PC-9 (cell line): ENCODE measurements at regions of chr2 and their contacts with region 1.

Region 1: GRCh38 chr2:203014456-203015199 is at the start of gene NBEAL1:
- DNase-seq: peak; percentile 84 to 96
- H3K4me3 ChIP-seq: peak within 1 kb of the TSS; percentile 83
- H3K27ac ChIP-seq: peak within 1 kb of the TSS; percentile 86
- H3K4me1 ChIP-seq: peaks cover 24% of the 10 kb centered on the region
- H3K27me3 ChIP-seq: no peaks in the 10 kb centered on the region
- CTCF ChIP-seq: no peak
- total RNA-seq, gene NBEAL1: 19.5 and 20.7 TPM in 2 replicates

Region 2: GRCh38 chr2:201929281-201930026 is 1085.2 kb before region 1 on chr2:
- CTCF ChIA-PET with region 1: no interaction called
- POLR2A ChIA-PET with region 1: no interaction called
- intact Hi-C with region 1: no loop called
- DNase-seq: no peak
- H3K4me3 ChIP-seq: no peak overlapping the region
- H3K27ac ChIP-seq: no peak overlapping the region
- H3K4me1 ChIP-seq: no peaks in the 10 kb centered on the region
- H3K27me3 ChIP-seq: no peaks in the 10 kb centered on the region
- CTCF ChIP-seq: no peak

Region 3: DNA sequence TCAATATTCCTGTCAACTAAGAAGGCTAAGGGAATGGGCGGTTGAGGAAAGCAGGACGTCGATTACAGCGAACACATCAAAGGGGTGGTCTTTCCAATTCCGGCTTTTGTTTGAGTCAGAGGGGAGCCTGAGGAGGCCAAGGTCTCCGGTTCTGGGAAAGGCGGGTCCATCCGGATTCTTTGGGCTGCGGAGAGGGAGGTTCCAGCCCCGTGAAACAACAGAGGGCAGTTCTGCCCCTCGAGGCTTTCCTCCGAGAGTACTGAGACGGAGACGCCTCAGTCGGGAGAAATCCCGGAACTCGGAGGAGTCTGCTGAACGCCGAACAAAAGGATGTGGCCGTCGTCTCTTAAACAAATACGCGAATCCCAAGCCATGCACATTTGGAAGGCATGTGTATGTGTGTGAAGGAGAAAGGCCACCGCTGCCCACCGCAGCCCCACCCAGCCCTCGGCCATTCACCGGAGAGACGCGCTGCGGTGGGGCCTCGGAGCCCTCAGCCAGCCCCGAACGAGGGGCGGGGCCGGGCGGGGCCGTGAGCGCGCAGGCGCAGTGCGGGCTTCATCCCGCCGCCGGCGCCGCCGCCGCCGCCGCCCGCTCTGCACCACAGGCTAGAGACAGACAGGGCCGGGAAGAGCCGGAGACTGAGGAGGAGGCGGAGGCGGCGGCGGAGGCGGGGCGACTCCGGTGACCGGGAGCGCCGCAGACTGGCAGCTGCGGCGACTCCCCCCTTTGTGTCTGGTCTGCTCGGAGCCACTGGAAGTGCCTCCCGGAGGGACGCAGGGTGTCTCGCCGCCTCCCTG is 638.8 kb before region 1 on chr2 and contains the start of gene BMPR2:
- CTCF ChIA-PET with region 1: interaction called, 12 read pairs
- POLR2A ChIA-PET with region 1: no interaction called
- intact Hi-C with region 1: no loop called
- DNase-seq: peak; percentile 64 to 90
- H3K4me3 ChIP-seq: peak within 1 kb of the TSS; percentile 85
- H3K27ac ChIP-seq: peak within 1 kb of the TSS; percentile 77
- H3K4me1 ChIP-seq: peaks cover 22% of the 10 kb centered on the region; the same call in 1 of the 2 replicates
- H3K27me3 ChIP-seq: no peaks in the 10 kb centered on the region
- CTCF ChIP-seq: no peak
- total RNA-seq, gene BMPR2: 17.6 and 23.2 TPM in 2 replicates

Region 4: GRCh38 chr2:202911512-202912341 is 102.9 kb before region 1 on chr2 and contains the starts of genes CARF and WDR12:
- CTCF ChIA-PET with region 1: no interaction called
- POLR2A ChIA-PET with region 1: no interaction called
- intact Hi-C with region 1: loop called (anchors 5 kb)
- DNase-seq: peak; percentile 75 to 76
- H3K4me3 ChIP-seq: peak within 1 kb of the TSS; percentile 96
- H3K27ac ChIP-seq: peak within 1 kb of the TSS; percentile 78
- H3K4me1 ChIP-seq: peaks cover 13% of the 10 kb centered on the region; the same call in 1 of the 2 replicates
- H3K27me3 ChIP-seq: no peaks in the 10 kb centered on the region
- CTCF ChIP-seq: no peak
- total RNA-seq, gene CARF: 5.9 and 6.5 TPM in 2 replicates
- total RNA-seq, gene WDR12: 38.7 and 45.3 TPM in 2 replicates